ENCODE measurements at regions of chr1 and their contacts with region 1.

Region 1: GRCh38 chr1:26169669-26170471 is at the start of gene ZNF593:
- DNase-seq: peak; percentile 84 to 96 (median 93)

Region 2: GRCh38 chr1:26233903-26234643 is 64.2 kb after region 1 on chr1 and contains the start of gene CEP85:
- intact Hi-C with region 1: loop called (anchors 5 kb)
- DNase-seq: peak; percentile 97 to 100 (median 99)

Region 3: DNA sequence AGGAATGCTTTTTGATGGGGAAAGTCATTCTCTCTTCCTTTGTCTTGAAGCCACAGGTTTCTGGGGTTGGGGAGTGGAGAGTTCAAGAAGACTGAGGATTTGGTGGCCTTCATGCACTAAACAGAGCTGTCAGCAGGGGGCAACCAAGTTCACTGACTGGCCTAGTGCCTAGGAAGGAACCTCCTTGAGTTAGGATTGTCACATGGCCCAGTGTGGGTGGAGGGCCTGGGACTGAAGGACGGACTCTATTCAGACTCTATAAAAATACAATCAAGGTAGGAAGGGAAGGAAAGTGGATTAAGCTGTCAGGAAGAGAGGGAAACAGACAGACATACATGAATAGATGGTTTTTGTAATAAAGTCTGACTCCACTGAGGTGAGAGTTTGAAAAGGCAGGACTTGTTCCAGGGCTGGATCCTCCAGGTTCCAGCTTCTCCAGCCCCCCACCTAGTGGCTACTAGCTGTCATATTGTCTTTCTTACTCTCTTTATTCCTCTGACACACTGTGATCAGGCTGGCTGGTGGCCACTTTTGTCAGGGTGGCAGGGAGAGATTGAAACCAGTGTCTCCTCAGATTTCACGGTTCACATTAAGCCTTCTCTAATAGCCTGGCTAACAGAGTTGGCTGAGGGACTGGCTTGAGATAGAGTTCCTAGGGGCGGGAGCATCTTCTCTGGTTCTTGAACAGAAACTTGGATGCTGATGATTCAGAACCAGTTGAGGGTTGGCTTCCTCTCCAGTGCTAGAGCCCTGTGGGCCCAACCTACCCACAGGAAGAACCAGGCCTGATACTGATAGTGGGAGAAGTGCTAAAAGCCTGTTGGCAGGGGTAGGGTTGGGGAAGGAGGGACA is 105.9 kb after region 1 on chr1:
- intact Hi-C with region 1: no loop called
- DNase-seq: peak; percentile 56 to 92 (median 82)

Measured in head of caudate nucleus (tissue), 42 donors.